ENCODE measurements at regions of chr22 and their contacts with region 1.

Region 1: DNA sequence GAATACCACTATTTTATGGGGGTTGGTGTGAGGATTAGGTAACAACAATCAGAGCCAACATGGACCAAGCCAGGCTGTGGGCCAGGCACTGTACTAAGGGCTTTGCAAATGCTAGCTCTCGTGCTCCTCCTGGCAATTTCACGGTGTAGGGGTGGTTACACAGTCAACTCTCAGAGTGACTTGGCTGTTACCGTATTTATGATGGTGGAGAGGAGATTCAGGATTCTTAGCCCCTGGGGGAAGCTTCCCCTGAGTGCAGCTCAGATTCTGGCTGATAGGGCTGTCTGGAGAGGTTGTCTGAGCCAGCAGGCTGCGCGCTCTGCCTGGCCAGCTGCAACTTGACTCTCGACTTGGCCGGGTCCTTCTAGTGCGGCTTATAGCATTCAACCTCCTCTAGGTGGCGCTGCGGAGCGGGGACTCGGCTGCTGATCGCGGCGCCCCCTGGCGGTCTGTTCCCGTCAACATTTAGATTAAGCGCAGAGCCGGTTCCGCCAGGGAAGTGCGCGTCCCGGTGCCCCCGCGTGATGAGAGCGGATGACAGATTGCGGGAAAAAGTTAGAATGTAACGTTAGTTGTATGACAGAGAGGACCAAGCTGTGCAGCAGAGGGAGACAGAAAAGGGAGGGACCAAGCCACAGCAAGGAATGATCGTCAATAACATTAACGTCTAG is 4.5 kb upstream of the NCF4 start:
- DNase-seq: peak; percentile 92
- ATAC-seq: peak; percentile 91 to 93

Region 2: DNA sequence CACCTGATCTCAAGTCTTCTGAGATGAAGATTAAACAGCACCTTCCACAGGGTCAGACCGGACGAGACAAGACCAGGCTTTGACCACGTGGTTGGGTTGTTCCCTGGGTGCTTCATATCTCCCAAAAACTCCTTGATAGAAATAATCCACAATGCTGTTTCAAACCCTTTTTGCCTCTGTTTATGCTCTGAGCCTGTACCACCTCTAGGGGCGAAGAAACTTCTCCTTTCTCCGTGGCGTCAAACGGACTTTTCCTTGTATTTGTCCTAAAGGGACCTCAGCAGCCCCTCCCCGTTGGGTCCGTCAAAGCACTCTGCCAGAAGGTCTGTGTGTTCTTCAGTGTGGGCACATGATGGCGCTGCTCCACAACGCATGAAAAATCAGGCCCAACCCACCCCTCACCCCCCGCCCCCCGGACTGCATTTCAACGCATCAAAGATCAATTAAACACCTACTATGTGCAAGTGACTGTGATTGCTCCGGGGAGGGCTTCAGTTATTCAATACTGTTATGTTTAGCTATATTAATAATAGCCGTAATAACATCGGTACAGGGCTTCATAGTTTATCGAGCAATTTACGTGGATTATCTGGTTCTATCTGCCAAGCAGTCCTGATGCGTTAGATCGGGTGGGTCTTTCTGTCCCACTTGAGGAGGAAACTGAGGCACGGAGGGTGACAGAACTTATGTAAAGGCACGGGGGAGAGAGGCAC is 310.0 kb before region 1 on chr22:
- intact Hi-C with region 1: loop called in 1 of 2 experiments (anchors 2 kb)
- DNase-seq: peak; percentile 39
- ATAC-seq: peak; percentile 63

Region 3: DNA sequence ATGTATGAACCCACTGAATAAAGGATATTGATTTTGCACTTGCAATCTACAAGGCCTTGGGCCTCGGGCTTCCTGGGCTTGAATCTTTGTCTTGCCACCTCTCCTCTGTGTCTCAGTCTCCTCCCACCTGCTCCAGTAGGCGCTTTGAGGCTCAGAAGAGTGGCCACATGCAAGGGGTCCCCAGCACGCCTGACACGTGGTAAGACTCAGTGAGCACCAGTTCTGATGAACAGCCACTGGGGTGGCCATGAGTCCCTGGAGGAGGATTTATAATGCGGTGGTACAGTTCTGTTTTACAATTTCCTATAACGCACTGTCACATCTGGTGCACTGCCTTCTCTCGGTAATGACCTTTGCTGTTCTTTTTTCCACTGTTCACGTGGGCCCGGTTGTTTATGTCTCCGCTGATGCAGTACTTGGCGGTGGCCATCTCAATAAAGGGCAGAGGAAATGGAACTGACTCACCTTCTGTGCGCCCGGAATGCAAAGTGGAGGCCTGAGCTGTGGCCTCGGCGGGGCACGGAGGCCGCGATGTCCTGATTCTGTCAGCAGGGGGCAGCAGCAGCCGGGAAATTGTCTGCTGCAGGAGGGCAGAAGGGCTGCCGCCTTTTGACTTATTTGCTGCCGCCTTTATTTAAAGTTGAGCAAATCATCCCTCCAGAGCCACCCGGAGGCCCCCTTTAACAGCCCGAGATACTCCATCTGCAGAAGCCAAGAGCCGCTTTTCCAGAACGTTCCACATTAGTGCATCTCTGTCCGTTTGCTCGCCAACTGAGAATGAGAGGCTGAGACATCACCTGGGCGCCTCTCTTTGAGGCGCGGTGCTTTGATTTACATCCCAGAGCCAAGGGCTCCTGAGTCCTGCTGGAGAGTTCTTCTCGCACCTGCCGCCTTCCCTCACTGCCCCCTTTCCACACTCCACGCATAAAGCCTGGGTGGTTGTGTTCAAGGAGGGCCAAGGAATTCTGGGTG is 74.3 kb before region 1 on chr22:
- intact Hi-C with region 1: loop called (anchors 2 to 5 kb)
- DNase-seq: peak; percentile 82
- ATAC-seq: peak; percentile 91 to 94

Region 4: GRCh38 chr22:36787204-36787988 is 68.9 kb before region 1 on chr22:
- intact Hi-C with region 1: loop called (anchors 2 to 5 kb)
- DNase-seq: no peak
- ATAC-seq: no peak

Region 5: GRCh38 chr22:36891646-36892045 is 35.4 kb after region 1 on chr22:
- intact Hi-C with region 1: no loop called
- DNase-seq: no peak
- ATAC-seq: no peak

Region 6: DNA sequence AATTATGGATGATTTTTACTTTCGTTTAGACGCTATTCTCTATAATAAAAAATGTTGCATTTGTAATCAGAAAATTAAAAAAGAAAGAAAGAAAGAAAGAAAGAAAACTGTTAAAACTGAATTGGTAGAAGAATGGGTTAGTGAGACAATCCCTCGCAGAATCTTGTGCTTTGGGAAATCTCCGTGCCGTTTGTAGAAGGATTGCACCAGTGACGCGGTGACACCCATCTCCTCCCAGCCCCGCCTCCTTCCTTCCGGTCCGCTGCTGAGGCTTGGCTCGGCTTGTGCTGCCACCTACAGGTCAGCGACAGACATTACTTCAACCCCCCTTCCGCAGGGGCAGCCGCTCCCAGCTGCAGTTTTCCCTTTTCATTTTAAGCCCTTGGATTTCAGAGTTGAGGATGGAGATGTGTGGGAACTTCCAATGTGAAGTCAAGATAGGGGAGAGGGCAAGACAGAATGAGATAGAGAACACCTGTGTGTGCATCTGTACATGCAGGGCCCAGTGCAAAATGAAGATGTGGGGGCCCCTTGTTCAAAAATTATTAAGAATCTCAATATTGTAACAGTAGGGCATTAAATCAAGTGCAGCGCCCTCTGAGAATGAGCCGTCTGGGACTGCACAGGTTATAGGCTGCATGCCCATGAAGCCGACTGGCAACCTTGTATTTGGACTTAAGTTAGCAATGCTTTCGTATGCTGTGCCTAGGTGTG is 121.8 kb after region 1 on chr22:
- intact Hi-C with region 1: loop called in 1 of 2 experiments (anchors 5 kb)
- DNase-seq: peak; percentile 92
- ATAC-seq: peak; percentile 98

Measured in left cardiac atrium (tissue), 4 donors.